HAP-1 (cell line): ENCODE measurements at regions of chr11 and their contacts with region 1.

Region 1: DNA sequence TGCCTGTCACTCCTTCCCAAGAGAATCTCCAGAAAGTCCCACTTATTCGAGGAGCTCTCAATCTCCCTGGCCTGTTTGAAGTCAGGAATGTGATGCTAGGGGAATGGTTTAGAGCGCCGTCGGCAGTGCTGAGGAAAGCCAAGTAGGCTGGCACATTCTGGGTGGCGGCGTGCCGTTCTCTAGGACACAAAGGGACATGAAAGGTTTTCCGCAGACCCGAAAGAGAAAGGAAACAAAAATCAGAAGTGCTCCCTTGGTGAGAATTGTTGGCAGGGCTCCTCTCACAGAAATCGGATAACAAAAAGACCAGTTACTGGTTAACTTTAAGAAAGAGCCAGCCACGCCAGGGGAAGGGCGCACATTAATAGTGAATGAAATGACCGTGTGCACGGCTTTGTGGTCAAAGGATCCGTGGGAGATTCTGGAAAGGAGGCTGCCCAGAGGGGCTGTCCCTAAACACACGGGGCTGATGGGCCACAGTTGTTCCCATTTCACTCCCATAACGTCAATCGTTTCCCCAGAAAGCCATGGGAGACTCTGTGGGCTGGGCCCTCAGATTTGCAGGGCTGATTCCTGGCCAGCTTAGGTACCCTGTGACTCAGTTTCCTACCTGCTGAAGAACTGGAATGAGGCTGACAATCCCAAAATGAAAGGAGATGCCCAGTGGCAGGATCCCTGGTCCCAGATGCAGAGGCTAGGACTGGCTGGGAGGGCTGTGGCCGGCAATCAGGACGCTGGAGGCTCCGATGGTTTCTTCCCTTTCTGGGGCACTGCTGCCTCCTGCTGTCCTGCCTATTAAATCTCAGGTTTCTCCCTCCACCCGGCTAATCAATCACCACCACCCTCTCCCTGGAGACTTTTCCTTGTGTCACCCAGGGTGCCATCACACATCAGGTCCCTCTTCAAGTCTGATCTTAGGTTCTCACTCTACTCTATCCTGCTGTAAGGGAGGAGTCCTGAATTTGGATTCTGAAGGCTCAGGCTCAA is 82.3 kb downstream of the RCN1 start:
- DNase-seq: peak; percentile 7 to 62
- H3K4me3 ChIP-seq: no peak overlapping the region
- H3K4me1 ChIP-seq: no peaks in the 10 kb centered on the region
- H3K27me3 ChIP-seq: peaks cover 9% of the 10 kb centered on the region

Region 2: DNA sequence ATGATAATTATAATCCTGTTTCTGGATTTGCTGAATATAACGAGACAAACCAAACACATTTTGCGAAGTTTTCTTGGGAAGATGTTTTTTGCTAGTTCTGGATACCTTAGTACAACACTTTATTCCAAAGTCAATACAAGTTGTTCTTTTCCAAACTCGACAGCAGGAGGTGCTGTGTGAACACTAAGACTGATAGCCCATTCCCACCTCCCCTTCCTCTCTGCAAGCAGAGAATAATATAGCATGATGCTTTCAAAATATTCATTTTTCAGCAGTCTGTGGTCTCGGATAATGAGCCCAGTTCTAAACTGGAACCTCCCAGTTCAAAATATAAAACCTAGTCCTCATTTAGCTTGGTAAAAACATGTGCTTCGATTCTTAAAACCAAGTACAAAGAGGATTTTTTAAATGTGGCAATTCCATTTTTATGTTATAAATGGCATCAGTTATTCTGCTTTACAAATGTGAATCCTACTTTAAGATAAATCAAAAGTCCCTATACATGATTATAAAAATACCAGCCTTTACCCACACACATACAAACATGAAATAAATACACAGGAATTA is 932.7 kb before region 1 on chr11:
- in situ Hi-C with region 1: loop called (anchors 25 kb)
- DNase-seq: peak; percentile 59 to 60
- H3K4me3 ChIP-seq: no peak overlapping the region
- H3K4me1 ChIP-seq: peaks cover 2% of the 10 kb centered on the region; the same call in 1 of the 2 replicates
- H3K27me3 ChIP-seq: peaks cover 43% of the 10 kb centered on the region

Region 3: GRCh38 chr11:32052218-32052617 is 120.9 kb before region 1 on chr11:
- in situ Hi-C with region 1: loop called (anchors 5 kb)
- DNase-seq: peak; percentile 35 to 69
- H3K4me3 ChIP-seq: no peak overlapping the region
- H3K4me1 ChIP-seq: no peaks in the 10 kb centered on the region
- H3K27me3 ChIP-seq: peaks cover 26% of the 10 kb centered on the region